ENCODE measurements at regions of chr7 and their contacts with region 1.

Region 1: GRCh38 chr7:100081535-100082102 is at the start of gene ZNF3:
- DNase-seq: peak; percentile 98 to 99 (median 98)
- H3K4me3 ChIP-seq: peak within 1 kb of the TSS; percentile 87 to 88
- H3K4me3 Mint-ChIP-seq: peak within 1 kb of the TSS; percentile 85 to 97 (median 94)
- H3K27ac ChIP-seq: peak within 1 kb of the TSS; percentile 74
- H3K27ac Mint-ChIP-seq: peak within 1 kb of the TSS; percentile 90 to 99 (median 95)
- H3K4me1 ChIP-seq: peaks cover 25% of the 10 kb centered on the region
- H3K4me1 Mint-ChIP-seq: peaks cover 23 to 48% (median 36%) of the 10 kb centered on the region in 4 donors
- H3K27me3 ChIP-seq: no peaks in the 10 kb centered on the region
- H3K27me3 Mint-ChIP-seq: no peaks in the 10 kb centered on the region
- total RNA-seq, gene ZNF3: 44.2 to 44.8 TPM

Region 2: DNA sequence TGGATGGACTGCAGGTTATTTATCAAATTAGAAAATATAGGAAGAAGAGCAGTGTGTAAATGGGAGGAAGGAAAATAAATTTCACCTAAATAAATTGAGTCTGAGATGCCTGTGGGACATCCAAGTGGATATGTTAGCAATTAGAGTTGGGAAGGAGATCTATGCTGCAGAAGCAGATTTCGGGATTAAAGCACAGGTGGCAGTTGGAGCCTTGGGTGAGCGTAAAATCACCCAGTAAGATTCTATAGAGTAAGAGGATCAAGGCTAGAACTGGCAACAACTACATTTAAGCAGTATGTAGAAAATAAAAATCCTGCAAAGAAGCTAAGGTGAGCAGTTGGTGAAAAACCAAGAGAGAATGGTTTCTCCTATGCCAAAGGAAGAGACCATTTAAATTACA is 170.6 kb before region 1 on chr7:
- CTCF ChIA-PET with region 1: interaction called, 15 read pairs
- POLR2A ChIA-PET with region 1: interaction called, 3 read pairs
- intact Hi-C with region 1: loop called (anchors 2 kb)
- DNase-seq: no peak
- H3K4me3 ChIP-seq: no peak overlapping the region
- H3K4me3 Mint-ChIP-seq: peak overlapping the region in 1 of 8 donors; percentile 54
- H3K27ac ChIP-seq: no peak overlapping the region
- H3K27ac Mint-ChIP-seq: peak overlapping the region in 2 of 7 donors; percentile 42 to 68
- H3K4me1 ChIP-seq: peaks cover 25% of the 10 kb centered on the region
- H3K4me1 Mint-ChIP-seq: peaks cover 33 to 65% (median 51%) of the 10 kb centered on the region in 4 donors
- H3K27me3 ChIP-seq: no peaks in the 10 kb centered on the region
- H3K27me3 Mint-ChIP-seq: no peaks in the 10 kb centered on the region

Region 3: GRCh38 chr7:99975782-99976521 is 105.7 kb before region 1 on chr7 and contains the start of gene AZGP1:
- CTCF ChIA-PET with region 1: interaction called, 4 read pairs
- POLR2A ChIA-PET with region 1: no interaction called
- intact Hi-C with region 1: loop called (anchors 5 kb)
- DNase-seq: no peak
- H3K4me3 ChIP-seq: no peak within 1 kb of the TSS
- H3K4me3 Mint-ChIP-seq: no peak within 1 kb of the TSS
- H3K27ac ChIP-seq: no peak within 1 kb of the TSS
- H3K27ac Mint-ChIP-seq: no peak within 1 kb of the TSS
- H3K4me1 ChIP-seq: no peaks in the 10 kb centered on the region
- H3K4me1 Mint-ChIP-seq: peaks cover 0 to 2% (median 0%) of the 10 kb centered on the region in 4 donors
- H3K27me3 ChIP-seq: no peaks in the 10 kb centered on the region
- H3K27me3 Mint-ChIP-seq: peaks cover 9 to 16% of the 10 kb centered on the region in 2 donors
- total RNA-seq, gene AZGP1: not detected

Region 4: DNA sequence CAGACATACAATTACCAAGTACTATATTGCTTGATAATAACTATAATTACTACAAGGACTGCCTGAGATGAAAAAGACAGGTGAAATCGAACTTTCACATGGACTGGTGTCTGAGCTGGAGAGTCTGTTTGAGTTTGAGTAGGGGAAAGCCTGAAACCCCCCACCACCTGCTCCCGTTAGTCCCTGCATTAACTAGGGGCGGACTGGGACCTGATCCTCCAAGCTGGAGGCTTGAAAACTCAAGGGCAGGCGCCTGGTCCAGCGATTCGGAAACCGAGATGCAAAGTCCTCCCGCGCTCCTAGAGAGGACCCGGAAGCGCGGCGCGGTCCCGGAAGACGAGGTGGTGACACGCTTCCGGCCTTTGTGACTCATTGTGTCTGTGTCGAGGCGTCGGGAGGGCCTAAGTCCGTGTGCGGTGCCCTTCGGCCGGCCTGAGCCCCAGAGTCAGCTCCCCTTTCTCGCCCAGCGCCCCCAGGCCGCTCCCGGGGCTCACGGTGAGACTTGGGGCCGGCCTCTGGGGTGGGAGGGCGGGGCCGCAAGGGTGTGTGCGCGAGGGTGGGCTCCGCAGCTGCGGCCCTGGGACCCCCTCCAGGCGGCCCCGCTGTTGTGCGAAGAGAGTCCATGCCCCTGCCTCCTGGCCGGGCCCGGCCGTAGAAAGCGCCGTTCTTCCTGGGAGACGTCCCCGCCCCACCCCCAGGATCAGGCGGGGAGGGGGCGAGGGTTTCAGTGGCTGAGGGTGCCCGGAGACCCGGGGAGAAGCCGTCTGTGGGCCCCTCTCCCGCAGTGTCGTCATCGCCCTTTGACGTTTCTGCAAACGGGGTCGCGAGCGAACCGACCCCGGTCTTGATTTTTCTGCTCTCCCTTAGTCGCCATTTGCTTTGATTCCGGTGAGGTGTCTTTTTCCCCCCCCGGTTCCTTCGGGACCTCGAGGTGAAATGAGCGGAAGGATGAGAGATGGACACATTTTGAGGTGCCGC is 66.1 kb before region 1 on chr7 and contains the start of gene ZKSCAN1:
- CTCF ChIA-PET with region 1: interaction called, 9 read pairs
- POLR2A ChIA-PET with region 1: interaction called, 7 read pairs
- intact Hi-C with region 1: loop called (anchors 1 kb)
- DNase-seq: peak; percentile 81 to 87 (median 85)
- H3K4me3 ChIP-seq: peak within 1 kb of the TSS; percentile 92
- H3K4me3 Mint-ChIP-seq: peak within 1 kb of the TSS; percentile 87 to 97 (median 96)
- H3K27ac ChIP-seq: peak within 1 kb of the TSS; percentile 96
- H3K27ac Mint-ChIP-seq: peak within 1 kb of the TSS; percentile 95 to 99 (median 98)
- H3K4me1 ChIP-seq: peaks cover 43% of the 10 kb centered on the region
- H3K4me1 Mint-ChIP-seq: peaks cover 28 to 53% (median 42%) of the 10 kb centered on the region in 4 donors
- H3K27me3 ChIP-seq: no peaks in the 10 kb centered on the region
- H3K27me3 Mint-ChIP-seq: no peaks in the 10 kb centered on the region
- total RNA-seq, gene ZKSCAN1: 94.8 to 101 TPM

Region 5: GRCh38 chr7:100101016-100101862 is 19.6 kb after region 1 on chr7 and contains the starts of genes AP4M1 and MCM7:
- CTCF ChIA-PET with region 1: interaction called, 14 read pairs
- POLR2A ChIA-PET with region 1: interaction called, 83 read pairs
- intact Hi-C with region 1: loop called (anchors 1 kb)
- DNase-seq: peak; percentile 94 to 97 (median 94)
- H3K4me3 ChIP-seq: peak within 1 kb of the TSS; percentile 95
- H3K4me3 Mint-ChIP-seq: peak within 1 kb of the TSS; percentile 92 to 95 (median 93)
- H3K27ac ChIP-seq: peak within 1 kb of the TSS; percentile 96
- H3K27ac Mint-ChIP-seq: peak within 1 kb of the TSS; percentile 93 to 99 (median 97)
- H3K4me1 ChIP-seq: peaks cover 29% of the 10 kb centered on the region
- H3K4me1 Mint-ChIP-seq: peaks cover 22 to 46% (median 34%) of the 10 kb centered on the region in 4 donors
- H3K27me3 ChIP-seq: no peaks in the 10 kb centered on the region
- H3K27me3 Mint-ChIP-seq: peaks cover 0 to 2% of the 10 kb centered on the region in 2 donors
- total RNA-seq, gene AP4M1: 12.1 to 14.9 TPM
- total RNA-seq, gene MCM7: 164 to 173 TPM

Region 6: DNA sequence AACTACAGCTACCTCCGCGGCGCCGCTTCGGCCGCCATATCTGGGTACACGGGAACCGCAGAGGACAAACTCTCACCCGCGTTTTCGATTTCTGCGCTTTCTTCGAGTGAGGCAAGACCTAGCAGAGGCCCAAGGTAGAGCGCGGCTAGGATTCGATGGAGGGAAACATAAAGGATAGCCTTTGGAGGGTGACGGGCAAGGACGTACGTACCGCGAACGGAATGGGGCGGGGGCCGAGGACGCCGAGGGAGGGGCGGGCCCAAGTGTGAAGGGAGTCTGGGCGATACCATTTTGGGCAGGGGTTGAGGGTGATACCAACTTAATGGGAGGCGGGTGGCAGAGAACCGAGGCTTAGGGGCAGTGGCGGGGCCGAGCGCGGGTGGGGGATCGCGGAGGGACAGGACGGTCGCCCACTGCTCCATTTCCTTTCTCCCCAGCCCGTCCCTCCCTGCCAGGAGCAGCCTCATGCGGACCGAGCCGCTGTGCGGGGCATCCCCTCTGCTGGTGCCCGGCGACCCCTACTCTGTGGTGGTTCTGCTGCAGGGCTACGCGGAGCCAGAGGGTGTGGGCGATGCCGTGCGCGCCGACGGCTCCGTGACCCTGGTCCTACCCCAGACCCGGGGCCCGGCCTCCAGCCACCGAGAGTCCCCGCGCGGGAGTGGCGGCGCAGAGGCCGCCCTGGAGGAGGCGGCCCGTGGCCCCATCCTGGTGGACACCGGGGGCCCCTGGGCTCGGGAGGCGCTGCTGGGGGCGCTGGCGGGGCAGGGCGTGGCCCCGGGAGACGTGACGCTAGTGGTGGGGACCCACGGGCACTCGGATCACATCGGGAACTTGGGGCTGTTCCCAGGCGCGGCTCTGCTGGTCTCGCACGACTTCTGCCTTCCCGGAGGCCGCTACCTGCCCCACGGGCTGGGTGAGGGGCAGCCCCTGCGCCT is 45.6 kb after region 1 on chr7 and contains the start of gene MBLAC1:
- CTCF ChIA-PET with region 1: interaction called, 13 read pairs
- POLR2A ChIA-PET with region 1: interaction called, 6 read pairs
- intact Hi-C with region 1: loop called (anchors 1 kb)
- DNase-seq: peak; percentile 92 to 94 (median 93)
- H3K4me3 ChIP-seq: peak within 1 kb of the TSS; percentile 94 to 98
- H3K4me3 Mint-ChIP-seq: peak within 1 kb of the TSS; percentile 96 to 100 (median 99)
- H3K27ac ChIP-seq: peak within 1 kb of the TSS; percentile 87
- H3K27ac Mint-ChIP-seq: peak within 1 kb of the TSS; percentile 98 to 100 (median 100)
- H3K4me1 ChIP-seq: peaks cover 43% of the 10 kb centered on the region
- H3K4me1 Mint-ChIP-seq: peaks cover 20 to 46% (median 26%) of the 10 kb centered on the region in 4 donors
- H3K27me3 ChIP-seq: no peaks in the 10 kb centered on the region
- H3K27me3 Mint-ChIP-seq: no peaks in the 10 kb centered on the region
- total RNA-seq, gene MBLAC1: 6.4 to 6.8 TPM

Region 7: DNA sequence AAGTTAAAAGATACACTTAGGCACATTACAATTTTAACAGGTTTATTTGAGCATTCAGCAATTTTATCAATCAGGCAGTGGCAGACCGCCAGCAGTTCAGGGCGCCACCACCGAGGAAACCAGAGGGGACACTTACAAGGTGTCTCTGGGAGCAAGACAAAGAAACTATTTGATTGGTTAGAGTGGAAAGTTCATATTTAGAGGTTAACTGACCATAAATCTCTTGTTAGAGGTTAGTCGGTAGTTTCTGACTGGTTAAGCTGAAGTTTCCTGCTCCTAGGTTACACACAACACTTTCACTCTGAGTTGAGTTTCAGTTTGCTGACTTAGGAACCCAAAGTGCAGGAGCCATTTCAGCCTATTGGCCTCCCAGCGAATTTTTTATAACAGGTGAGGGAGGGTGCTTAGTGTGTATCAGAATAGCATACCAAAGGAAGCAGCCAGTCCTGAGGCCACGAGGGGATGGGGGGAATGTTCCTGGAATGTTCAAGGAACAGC is 127.3 kb after region 1 on chr7:
- CTCF ChIA-PET with region 1: no interaction called
- POLR2A ChIA-PET with region 1: no interaction called
- intact Hi-C with region 1: no loop called
- DNase-seq: peak in 3 of 5 donors; percentile 16 to 37 (median 20)
- H3K4me3 ChIP-seq: no peak overlapping the region
- H3K4me3 Mint-ChIP-seq: peak overlapping the region; percentile 58 to 80 (median 75)
- H3K27ac ChIP-seq: no peak overlapping the region
- H3K27ac Mint-ChIP-seq: peak overlapping the region; percentile 66 to 91 (median 84)
- H3K4me1 ChIP-seq: peaks cover 37% of the 10 kb centered on the region
- H3K4me1 Mint-ChIP-seq: peaks cover 32 to 43% (median 36%) of the 10 kb centered on the region in 4 donors
- H3K27me3 ChIP-seq: no peaks in the 10 kb centered on the region
- H3K27me3 Mint-ChIP-seq: no peaks in the 10 kb centered on the region

Region 8: DNA sequence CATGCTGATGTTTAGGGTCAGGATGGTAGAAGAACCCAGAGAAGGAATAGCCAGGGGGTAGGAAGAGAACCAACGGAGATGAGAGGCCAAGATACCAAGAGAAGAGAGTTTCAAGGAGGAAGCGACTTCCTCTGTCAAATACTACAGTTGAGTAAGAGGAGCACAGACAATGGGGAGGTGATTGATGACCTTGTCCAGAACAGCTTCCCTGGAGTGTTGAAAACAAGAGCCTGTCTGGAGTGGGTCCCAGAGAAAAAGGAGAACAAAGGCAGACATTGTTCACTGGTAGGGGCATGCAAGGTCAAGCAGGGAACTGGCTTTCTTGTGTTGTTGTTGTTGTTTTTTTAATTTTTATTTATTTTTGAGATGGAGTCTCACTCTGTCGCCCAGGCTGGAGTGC is 994.0 kb after region 1 on chr7:
- CTCF ChIA-PET with region 1: no interaction called
- POLR2A ChIA-PET with region 1: no interaction called
- intact Hi-C with region 1: no loop called
- DNase-seq: no peak
- H3K4me3 ChIP-seq: no peak overlapping the region
- H3K4me3 Mint-ChIP-seq: no peak overlapping the region
- H3K27ac ChIP-seq: no peak overlapping the region
- H3K27ac Mint-ChIP-seq: no peak overlapping the region
- H3K4me1 ChIP-seq: peaks cover 7% of the 10 kb centered on the region
- H3K4me1 Mint-ChIP-seq: peaks cover 0 to 5% (median 4%) of the 10 kb centered on the region in 4 donors
- H3K27me3 ChIP-seq: no peaks in the 10 kb centered on the region
- H3K27me3 Mint-ChIP-seq: peaks cover 9 to 12% of the 10 kb centered on the region in 2 donors

Measured in CD4-positive, alpha-beta memory T cell (primary cell).